HEK293T (cell line): ENCODE measurements at regions of chr5 and their contacts with region 1.

Region 1: GRCh38 chr5:180470966-180471582 is 23.1 kb upstream of the CNOT6 start:
- DNase-seq: peak; percentile 88

Region 2: DNA sequence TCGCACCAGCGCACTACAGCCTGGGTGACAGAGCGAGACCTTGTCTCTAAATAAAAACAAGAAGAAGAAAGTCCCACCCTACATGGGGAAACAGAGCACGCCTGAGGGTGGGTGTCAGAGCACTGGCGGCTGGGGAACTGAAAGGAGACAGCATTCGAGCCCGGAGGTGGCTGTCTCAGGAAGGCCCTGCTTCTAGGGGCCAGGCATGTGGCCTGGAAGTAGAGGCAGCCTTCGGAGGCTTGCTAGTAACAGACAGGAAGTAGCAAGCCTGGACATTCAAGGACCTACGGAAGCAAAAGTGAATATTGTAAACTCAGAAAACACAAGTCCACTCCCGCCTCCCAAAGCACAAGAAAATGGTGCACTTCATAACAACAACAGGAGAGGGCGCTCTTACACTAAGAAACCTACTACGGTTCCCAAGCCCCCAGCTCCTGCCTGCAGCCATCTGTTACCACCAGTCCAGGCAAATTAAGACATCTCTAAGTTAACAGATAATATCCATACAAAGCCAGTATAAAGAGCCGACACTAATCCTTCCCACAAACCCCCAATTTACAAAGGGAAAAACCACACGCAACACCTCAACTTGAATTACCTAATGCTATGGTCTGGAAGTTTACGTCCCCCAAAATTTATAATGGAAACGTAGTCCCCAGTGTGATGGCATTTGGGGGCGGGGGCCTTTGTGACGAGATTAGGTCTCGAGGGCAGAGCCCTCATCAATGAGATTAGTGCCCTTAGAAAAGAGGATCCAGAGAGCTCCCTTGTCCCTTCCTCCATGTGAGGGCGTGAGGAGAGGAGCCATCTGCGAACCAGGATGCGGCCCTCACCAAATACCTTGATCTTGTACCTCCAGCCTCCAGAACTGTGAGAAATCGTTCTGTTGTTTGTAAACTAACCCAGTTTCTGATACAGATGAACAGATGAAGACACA is 269.8 kb before region 1 on chr5:
- CTCF ChIA-PET with region 1: interaction called, 10 read pairs
- POLR2A ChIA-PET with region 1: no interaction called
- DNase-seq: peak; percentile 73

Region 3: DNA sequence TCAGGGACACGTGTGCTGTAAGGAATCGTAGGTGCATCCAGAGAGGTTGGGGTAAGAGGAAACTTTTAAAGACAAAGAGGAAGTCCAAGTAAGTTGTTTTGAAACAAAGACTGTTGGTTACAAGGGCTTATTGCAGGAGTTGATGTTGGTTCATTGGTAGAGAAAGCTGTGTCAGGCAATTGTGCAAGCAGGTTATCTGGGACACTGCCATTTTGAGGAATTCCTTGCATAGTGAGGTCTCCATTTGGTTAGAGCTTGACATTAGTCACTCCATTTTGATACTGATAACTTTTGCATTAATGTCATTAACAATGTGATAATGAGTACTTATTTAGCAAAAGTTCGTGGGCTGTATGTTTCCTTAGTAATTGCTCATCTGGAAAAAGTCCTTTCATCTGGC is 48.0 kb after region 1 on chr5:
- CTCF ChIA-PET with region 1: no interaction called
- POLR2A ChIA-PET with region 1: no interaction called
- DNase-seq: no peak